Activated CD4-positive, alpha-beta T cell treated with anti-CD3 and anti-CD28 coated beads, Interleukin-2, amount 10 ng/mL, durations not matched to agents 24 days and 14 days (primary cell): ENCODE measurements at regions of chr3 and their contacts with region 1.

Region 1: GRCh38 chr3:141796081-141796888 is 33.1 kb downstream of the GRK7 start:
- DNase-seq: peak; percentile 92
- H3K4me3 Mint-ChIP-seq: peak overlapping the region; percentile 84
- H3K27ac Mint-ChIP-seq: peak overlapping the region; percentile 100
- H3K4me1 Mint-ChIP-seq: peaks cover 44% of the 10 kb centered on the region
- H3K27me3 Mint-ChIP-seq: no peaks in the 10 kb centered on the region

Region 2: GRCh38 chr3:141487521-141488252 is 308.6 kb before region 1 on chr3:
- intact Hi-C with region 1: loop called (anchors 1 kb)
- DNase-seq: peak; percentile 96
- H3K4me3 Mint-ChIP-seq: peak overlapping the region; percentile 92
- H3K27ac Mint-ChIP-seq: peak overlapping the region; percentile 92
- H3K4me1 Mint-ChIP-seq: peaks cover 58% of the 10 kb centered on the region
- H3K27me3 Mint-ChIP-seq: peaks cover 2% of the 10 kb centered on the region

Region 3: DNA sequence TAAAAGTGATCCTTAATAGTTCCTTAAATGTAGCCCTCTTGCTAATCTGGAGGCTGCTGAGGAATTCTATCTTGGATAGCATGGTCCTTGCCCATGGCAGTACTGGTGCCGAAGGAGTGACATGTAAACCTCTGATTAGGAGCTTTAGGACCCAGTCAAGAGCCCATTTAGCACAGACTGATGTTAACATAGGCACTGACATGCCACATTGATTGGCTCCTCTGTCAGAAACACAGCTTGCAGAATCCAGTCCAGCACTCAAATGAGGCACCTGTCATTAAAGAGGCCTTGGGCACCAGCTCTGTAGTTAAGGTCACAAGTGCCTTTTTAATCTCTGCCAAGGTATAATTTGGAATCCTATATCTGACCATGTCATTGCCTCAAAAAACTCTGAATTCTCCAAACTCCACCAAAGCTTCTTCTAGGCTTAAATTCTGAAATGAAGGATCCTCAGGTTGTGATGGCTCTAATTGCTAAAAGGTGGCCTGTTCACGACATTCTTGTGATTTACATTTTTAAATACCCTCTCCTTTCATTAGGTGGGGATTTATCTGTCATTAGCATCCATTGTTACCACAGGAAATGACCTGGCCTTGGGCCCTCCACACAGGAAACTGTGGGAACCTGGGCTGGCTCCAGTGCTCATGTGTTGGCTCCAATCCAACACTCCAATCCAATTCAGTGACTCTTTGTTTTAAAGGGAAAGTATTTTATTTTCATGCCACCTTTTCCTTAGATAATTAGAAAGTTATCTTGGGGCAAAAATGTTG is 115.5 kb before region 1 on chr3:
- intact Hi-C with region 1: no loop called
- DNase-seq: no peak
- H3K4me3 Mint-ChIP-seq: no peak overlapping the region
- H3K27ac Mint-ChIP-seq: no peak overlapping the region
- H3K4me1 Mint-ChIP-seq: peaks cover 5% of the 10 kb centered on the region
- H3K27me3 Mint-ChIP-seq: peaks cover 4% of the 10 kb centered on the region

Region 4: DNA sequence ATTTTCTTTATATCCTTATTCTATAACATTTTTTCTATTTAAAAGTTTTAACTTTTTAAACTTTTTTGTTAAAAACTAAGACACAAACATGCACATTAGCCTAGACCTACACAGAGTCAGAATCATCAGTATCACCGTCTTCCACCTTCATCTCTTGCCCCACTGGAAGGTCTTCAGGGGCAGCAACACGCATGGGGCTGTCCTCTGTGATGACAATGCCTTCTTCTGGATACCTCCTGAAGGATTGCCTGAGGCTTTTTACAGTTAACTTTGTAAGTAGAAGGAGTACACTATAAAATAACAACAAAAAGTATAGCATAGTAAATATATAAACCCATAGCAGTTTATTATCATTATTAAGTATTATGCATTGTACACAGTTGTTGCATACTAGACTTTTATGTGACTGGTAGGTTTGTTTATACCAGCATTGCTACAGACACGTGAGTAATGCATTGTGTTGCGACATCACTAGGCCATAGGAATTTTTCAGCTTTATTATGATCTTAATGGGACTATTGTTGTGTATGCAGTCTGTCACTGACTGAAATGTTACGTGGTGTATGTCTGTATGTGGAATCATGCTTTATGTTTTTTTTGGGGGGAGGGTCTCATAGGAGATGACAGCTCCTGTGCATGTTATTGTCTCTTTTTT is 98.4 kb after region 1 on chr3:
- intact Hi-C with region 1: loop called (anchors 5 kb)
- DNase-seq: no peak
- H3K4me3 Mint-ChIP-seq: no peak overlapping the region
- H3K27ac Mint-ChIP-seq: peak overlapping the region; percentile 62
- H3K4me1 Mint-ChIP-seq: peaks cover 37% of the 10 kb centered on the region
- H3K27me3 Mint-ChIP-seq: no peaks in the 10 kb centered on the region

Region 5: GRCh38 chr3:141940204-141940776 is 144.0 kb after region 1 on chr3:
- intact Hi-C with region 1: loop called (anchors 1 kb)
- DNase-seq: no peak
- H3K4me3 Mint-ChIP-seq: no peak overlapping the region
- H3K27ac Mint-ChIP-seq: peak overlapping the region; percentile 72
- H3K4me1 Mint-ChIP-seq: peaks cover 13% of the 10 kb centered on the region
- H3K27me3 Mint-ChIP-seq: no peaks in the 10 kb centered on the region